Naive thymus-derived CD4-positive, alpha-beta T cell (primary cell): ENCODE measurements at regions of chr6 and their contacts with region 1.

Region 1: GRCh38 chr6:26216356-26216885 is 129.2 kb downstream of the HFE start:
- DNase-seq: peak; percentile 56 to 97 (median 93)
- ATAC-seq: peak; percentile 86
- H3K4me3 ChIP-seq: peak overlapping the region; percentile 72
- H3K4me3 Mint-ChIP-seq: no peak overlapping the region
- H3K27ac ChIP-seq: peak overlapping the region; percentile 84
- H3K27ac Mint-ChIP-seq: no peak overlapping the region
- H3K4me1 ChIP-seq: peaks cover 12 to 18% of the 10 kb centered on the region in 2 donors
- H3K4me1 Mint-ChIP-seq: peaks cover 3 to 31% (median 10%) of the 10 kb centered on the region in 7 donors
- H3K27me3 ChIP-seq: no peaks in the 10 kb centered on the region
- H3K27me3 Mint-ChIP-seq: no peaks in the 10 kb centered on the region

Region 2: GRCh38 chr6:26045065-26045927 is 171.1 kb before region 1 on chr6:
- CTCF ChIA-PET with region 1: no interaction called
- POLR2A ChIA-PET with region 1: interaction called, 55 read pairs
- intact Hi-C with region 1: no loop called
- DNase-seq: peak; percentile 39 to 93 (median 89)
- ATAC-seq: peak; percentile 68
- H3K4me3 ChIP-seq: peak overlapping the region; percentile 91
- H3K4me3 Mint-ChIP-seq: peak overlapping the region; percentile 87 to 98 (median 94)
- H3K27ac ChIP-seq: peak overlapping the region; percentile 90
- H3K27ac Mint-ChIP-seq: peak overlapping the region; percentile 80 to 98 (median 95)
- H3K4me1 ChIP-seq: peaks cover 7 to 19% of the 10 kb centered on the region in 2 donors
- H3K4me1 Mint-ChIP-seq: peaks cover 8 to 51% (median 20%) of the 10 kb centered on the region in 7 donors
- H3K27me3 ChIP-seq: no peaks in the 10 kb centered on the region
- H3K27me3 Mint-ChIP-seq: peaks cover 0 to 3% (median 0%) of the 10 kb centered on the region in 5 donors

Region 3: GRCh38 chr6:26175428-26176181 is 40.8 kb before region 1 on chr6:
- CTCF ChIA-PET with region 1: interaction called, 12 read pairs
- POLR2A ChIA-PET with region 1: interaction called, 2,611 read pairs
- intact Hi-C with region 1: loop called (anchors 1 kb)
- DNase-seq: peak in 7 of 9 donors; percentile 57 to 75 (median 66)
- ATAC-seq: peak; percentile 32
- H3K4me3 ChIP-seq: no peak overlapping the region
- H3K4me3 Mint-ChIP-seq: peak overlapping the region in 7 of 10 donors; percentile 15 to 63 (median 43)
- H3K27ac ChIP-seq: no peak overlapping the region
- H3K27ac Mint-ChIP-seq: peak overlapping the region; percentile 32 to 89 (median 76)
- H3K4me1 ChIP-seq: peaks cover 16 to 19% of the 10 kb centered on the region in 2 donors
- H3K4me1 Mint-ChIP-seq: peaks cover 20 to 51% (median 39%) of the 10 kb centered on the region in 7 donors
- H3K27me3 ChIP-seq: no peaks in the 10 kb centered on the region
- H3K27me3 Mint-ChIP-seq: no peaks in the 10 kb centered on the region

Region 4: DNA sequence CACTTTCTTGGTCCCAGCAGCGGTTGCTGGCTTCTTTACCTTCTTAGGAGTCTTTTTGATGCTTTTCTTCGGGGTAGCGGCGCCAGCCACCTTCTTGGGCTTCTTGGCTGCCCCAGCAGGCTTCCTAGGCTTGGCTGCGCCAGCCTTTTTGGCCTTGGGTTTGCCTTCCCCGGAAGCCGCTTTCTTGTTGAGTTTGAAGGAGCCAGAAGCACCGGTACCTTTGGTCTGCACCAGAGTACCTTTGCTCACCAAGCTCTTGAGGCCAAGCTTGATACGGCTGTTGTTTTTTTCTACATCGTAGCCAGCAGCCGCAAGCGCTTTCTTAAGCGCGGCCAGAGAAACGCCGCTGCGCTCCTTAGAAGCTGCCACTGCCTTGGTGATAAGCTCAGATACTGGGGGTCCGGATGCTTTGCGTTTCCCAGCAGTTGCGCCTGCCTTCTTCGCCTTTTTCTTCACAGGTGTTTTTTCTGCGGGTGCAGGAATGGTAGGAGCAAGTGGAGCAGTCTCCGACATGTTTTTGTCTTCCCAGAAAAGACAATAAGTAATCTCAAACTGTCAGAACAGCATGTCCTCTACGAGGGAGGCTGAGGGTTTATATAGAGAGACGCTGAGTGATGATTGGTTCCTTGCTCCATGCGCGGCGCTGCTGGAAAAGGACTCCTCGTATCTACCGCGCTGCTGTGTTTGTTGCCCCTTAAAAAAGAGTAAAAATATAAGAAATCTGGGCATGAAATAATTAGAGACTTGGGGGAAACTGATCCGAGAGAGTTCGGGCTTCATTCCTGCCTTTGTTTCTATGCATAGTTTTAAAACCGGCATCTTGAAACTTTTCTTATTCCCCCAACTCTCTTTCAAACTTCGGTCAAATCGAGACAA is 18.2 kb after region 1 on chr6:
- CTCF ChIA-PET with region 1: interaction called, 11 read pairs
- POLR2A ChIA-PET with region 1: interaction called, 2,165 read pairs
- intact Hi-C with region 1: loop called (anchors 1 kb)
- DNase-seq: peak; percentile 48 to 94 (median 85)
- ATAC-seq: peak; percentile 80
- H3K4me3 ChIP-seq: peak overlapping the region; percentile 93
- H3K4me3 Mint-ChIP-seq: peak overlapping the region; percentile 87 to 99 (median 94)
- H3K27ac ChIP-seq: peak overlapping the region; percentile 87
- H3K27ac Mint-ChIP-seq: peak overlapping the region; percentile 93 to 100 (median 98)
- H3K4me1 ChIP-seq: peaks cover under 1 to 18% of the 10 kb centered on the region in 2 donors
- H3K4me1 Mint-ChIP-seq: peaks cover 18 to 52% (median 38%) of the 10 kb centered on the region in 7 donors
- H3K27me3 ChIP-seq: no peaks in the 10 kb centered on the region
- H3K27me3 Mint-ChIP-seq: peaks cover 0 to 15% (median 0%) of the 10 kb centered on the region in 5 donors

Region 5: GRCh38 chr6:26270903-26271667 is 54.7 kb after region 1 on chr6:
- CTCF ChIA-PET with region 1: interaction called, 12 read pairs
- POLR2A ChIA-PET with region 1: interaction called, 459 read pairs
- intact Hi-C with region 1: loop called (anchors 1 kb)
- DNase-seq: peak; percentile 50 to 89 (median 85)
- ATAC-seq: peak; percentile 24
- H3K4me3 ChIP-seq: peak overlapping the region; percentile 83
- H3K4me3 Mint-ChIP-seq: no peak overlapping the region
- H3K27ac ChIP-seq: peak overlapping the region; percentile 82
- H3K27ac Mint-ChIP-seq: peak overlapping the region in 2 of 9 donors; percentile 10 to 91
- H3K4me1 ChIP-seq: peaks cover 6 to 27% of the 10 kb centered on the region in 2 donors
- H3K4me1 Mint-ChIP-seq: peaks cover 0 to 34% (median 15%) of the 10 kb centered on the region in 7 donors
- H3K27me3 ChIP-seq: no peaks in the 10 kb centered on the region
- H3K27me3 Mint-ChIP-seq: no peaks in the 10 kb centered on the region

Region 6: DNA sequence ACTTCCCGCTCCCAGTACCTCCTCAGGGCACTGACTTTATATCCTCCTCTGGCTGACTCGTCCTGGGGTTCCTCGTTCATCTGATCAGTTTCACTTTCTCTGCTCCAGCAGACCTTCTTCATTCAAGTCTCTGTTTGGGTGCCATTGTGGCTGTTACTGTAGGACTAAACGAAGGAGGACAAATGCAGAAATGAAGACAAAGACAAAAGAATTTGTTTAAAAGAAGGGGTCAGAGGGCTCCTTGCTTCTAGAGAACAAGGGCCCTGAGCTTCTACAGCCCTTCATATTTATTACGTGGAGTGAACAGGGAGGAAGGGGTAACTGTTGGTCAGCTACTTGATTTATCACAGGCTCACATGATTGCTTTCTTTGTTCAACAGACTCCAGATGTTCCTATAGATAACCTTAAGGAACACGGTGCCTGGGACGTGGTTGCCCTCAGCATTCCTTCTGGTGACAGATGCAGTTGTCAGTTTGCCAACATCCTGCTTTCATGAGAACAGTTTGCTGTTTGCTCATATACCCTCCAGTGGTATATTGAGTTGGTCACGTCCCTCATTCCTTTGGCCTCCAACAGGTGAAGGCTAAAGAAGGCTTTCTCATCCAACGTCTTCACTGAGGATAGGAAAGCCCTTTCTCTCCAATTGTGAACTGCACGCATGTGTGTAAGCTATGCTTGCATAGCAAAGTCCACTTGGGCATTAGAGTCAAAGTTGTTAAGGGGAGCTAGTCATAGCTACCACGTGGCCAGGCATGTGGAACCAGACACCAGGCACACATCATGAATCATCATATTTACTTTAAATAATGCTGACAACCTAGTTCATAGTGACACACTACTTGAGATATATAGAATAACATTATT is 79.5 kb after region 1 on chr6:
- CTCF ChIA-PET with region 1: no interaction called
- POLR2A ChIA-PET with region 1: no interaction called
- intact Hi-C with region 1: no loop called
- DNase-seq: no peak
- ATAC-seq: no peak
- H3K4me3 ChIP-seq: no peak overlapping the region
- H3K4me3 Mint-ChIP-seq: peak overlapping the region in 9 of 10 donors; percentile 11 to 78 (median 35)
- H3K27ac ChIP-seq: no peak overlapping the region
- H3K27ac Mint-ChIP-seq: peak overlapping the region in 7 of 9 donors; percentile 13 to 61 (median 35)
- H3K4me1 ChIP-seq: no peaks in the 10 kb centered on the region
- H3K4me1 Mint-ChIP-seq: peaks cover 3 to 15% (median 6%) of the 10 kb centered on the region in 7 donors
- H3K27me3 ChIP-seq: no peaks in the 10 kb centered on the region
- H3K27me3 Mint-ChIP-seq: peaks cover 0 to 9% (median 0%) of the 10 kb centered on the region in 5 donors

Region 7: GRCh38 chr6:26432663-26433201 is 216.3 kb after region 1 on chr6:
- CTCF ChIA-PET with region 1: no interaction called
- POLR2A ChIA-PET with region 1: no interaction called
- intact Hi-C with region 1: no loop called
- DNase-seq: no peak
- ATAC-seq: no peak
- H3K4me3 ChIP-seq: no peak overlapping the region
- H3K4me3 Mint-ChIP-seq: no peak overlapping the region
- H3K27ac ChIP-seq: no peak overlapping the region
- H3K27ac Mint-ChIP-seq: no peak overlapping the region
- H3K4me1 ChIP-seq: no peaks in the 10 kb centered on the region
- H3K4me1 Mint-ChIP-seq: peaks cover 0 to 6% (median 0%) of the 10 kb centered on the region in 7 donors
- H3K27me3 ChIP-seq: no peaks in the 10 kb centered on the region
- H3K27me3 Mint-ChIP-seq: no peaks in the 10 kb centered on the region

Region 8: DNA sequence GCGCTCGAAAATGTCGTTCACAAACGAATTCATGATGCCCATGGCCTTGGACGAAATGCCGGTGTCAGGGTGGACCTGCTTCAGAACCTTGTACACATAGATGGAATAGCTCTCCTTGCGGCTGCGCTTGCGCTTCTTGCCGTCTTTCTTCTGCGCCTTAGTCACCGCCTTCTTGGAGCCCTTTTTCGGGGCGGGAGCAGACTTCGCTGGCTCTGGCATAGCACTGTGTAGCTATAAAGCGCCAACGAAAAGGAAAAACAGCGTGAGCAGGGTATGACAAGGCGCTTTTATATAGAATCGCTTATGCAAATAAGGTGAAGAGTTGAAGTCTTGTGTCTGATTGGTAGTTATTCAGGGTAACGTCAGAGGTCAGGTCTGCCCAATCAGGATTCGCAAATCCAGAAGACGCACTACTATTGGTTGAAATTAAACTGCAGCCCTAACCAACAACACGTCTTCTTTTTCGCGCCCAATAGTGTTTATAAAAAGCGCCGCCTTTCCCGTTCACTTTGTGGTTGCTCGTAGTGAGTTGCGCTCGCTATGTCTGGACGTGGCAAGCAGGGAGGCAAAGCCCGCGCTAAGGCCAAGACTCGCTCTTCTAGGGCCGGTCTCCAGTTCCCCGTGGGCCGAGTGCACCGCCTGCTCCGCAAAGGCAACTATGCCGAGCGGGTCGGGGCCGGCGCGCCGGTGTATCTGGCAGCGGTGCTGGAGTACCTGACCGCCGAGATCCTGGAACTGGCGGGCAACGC is 916.3 kb after region 1 on chr6:
- CTCF ChIA-PET with region 1: interaction called, 3 read pairs
- POLR2A ChIA-PET with region 1: interaction called, 39 read pairs
- intact Hi-C with region 1: no loop called
- DNase-seq: peak; percentile 73 to 99 (median 97)
- ATAC-seq: peak; percentile 93
- H3K4me3 ChIP-seq: peak overlapping the region; percentile 90
- H3K4me3 Mint-ChIP-seq: no peak overlapping the region
- H3K27ac ChIP-seq: peak overlapping the region; percentile 81
- H3K27ac Mint-ChIP-seq: no peak overlapping the region
- H3K4me1 ChIP-seq: peaks cover 10 to 18% of the 10 kb centered on the region in 2 donors
- H3K4me1 Mint-ChIP-seq: peaks cover 6 to 49% (median 21%) of the 10 kb centered on the region in 7 donors
- H3K27me3 ChIP-seq: no peaks in the 10 kb centered on the region
- H3K27me3 Mint-ChIP-seq: no peaks in the 10 kb centered on the region

Region 9: GRCh38 chr6:27864906-27865849 is 1648.8 kb after region 1 on chr6:
- CTCF ChIA-PET with region 1: no interaction called
- POLR2A ChIA-PET with region 1: interaction called, 27 read pairs
- intact Hi-C with region 1: no loop called
- DNase-seq: peak; percentile 56 to 93 (median 89)
- ATAC-seq: peak; percentile 85
- H3K4me3 ChIP-seq: peak overlapping the region; percentile 74
- H3K4me3 Mint-ChIP-seq: peak overlapping the region; percentile 85 to 99 (median 97)
- H3K27ac ChIP-seq: peak overlapping the region; percentile 71
- H3K27ac Mint-ChIP-seq: peak overlapping the region; percentile 88 to 98 (median 95)
- H3K4me1 ChIP-seq: peaks cover 8 to 25% of the 10 kb centered on the region in 2 donors
- H3K4me1 Mint-ChIP-seq: peaks cover 22 to 64% (median 46%) of the 10 kb centered on the region in 7 donors
- H3K27me3 ChIP-seq: no peaks in the 10 kb centered on the region
- H3K27me3 Mint-ChIP-seq: peaks cover 0 to 16% (median 0%) of the 10 kb centered on the region in 5 donors